ENCODE measurements at regions of chr17 and their contacts with region 1.

Region 1: GRCh38 chr17:42577532-42578281 is at the start of gene PSMC3IP:
- DNase-seq: peak; percentile 89
- H3K4me3 ChIP-seq: peak within 1 kb of the TSS; percentile 53 to 85 (median 59)
- H3K27ac ChIP-seq: peak within 1 kb of the TSS; percentile 85 to 92 (median 90)
- H3K4me1 ChIP-seq: peaks cover 14 to 45% (median 22%) of the 10 kb centered on the region in 3 donors
- H3K27me3 ChIP-seq: no peaks in the 10 kb centered on the region
- CTCF ChIP-seq: peak; percentile 16 to 56 (median 52)
- POLR2A ChIP-seq: peak in 3 of 4 donors; percentile 45 to 66 (median 54)
- total RNA-seq, gene PSMC3IP: 0.61 to 4.8 (median 2.8) TPM

Region 2: DNA sequence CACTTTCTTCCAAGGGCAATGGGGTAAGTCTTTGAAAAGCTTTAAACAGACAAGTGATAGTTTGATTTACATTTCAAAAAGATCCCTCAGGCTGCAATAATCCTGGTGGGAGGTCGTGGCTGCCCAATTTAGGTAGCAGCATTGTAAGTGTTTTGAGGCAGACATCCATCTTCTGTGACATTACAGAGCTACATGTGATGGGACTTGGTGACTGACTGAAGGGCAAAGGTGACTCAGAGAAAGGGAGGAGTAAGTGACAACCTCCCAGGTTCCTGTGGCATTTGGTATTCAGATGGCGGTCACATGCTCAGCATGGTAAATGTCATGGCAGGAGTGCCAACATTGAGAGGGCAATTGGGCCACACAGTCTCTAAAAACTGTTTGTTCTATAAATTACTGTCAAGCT is 215.9 kb before region 1 on chr17:
- intact Hi-C with region 1: no loop called
- DNase-seq: no peak
- H3K4me3 ChIP-seq: no peak overlapping the region
- H3K27ac ChIP-seq: peak overlapping the region in 2 of 4 donors; percentile 23 to 40
- H3K4me1 ChIP-seq: peaks cover 16 to 75% (median 41%) of the 10 kb centered on the region in 3 donors
- H3K27me3 ChIP-seq: no peaks in the 10 kb centered on the region
- CTCF ChIP-seq: no peak
- POLR2A ChIP-seq: no peak

Region 3: DNA sequence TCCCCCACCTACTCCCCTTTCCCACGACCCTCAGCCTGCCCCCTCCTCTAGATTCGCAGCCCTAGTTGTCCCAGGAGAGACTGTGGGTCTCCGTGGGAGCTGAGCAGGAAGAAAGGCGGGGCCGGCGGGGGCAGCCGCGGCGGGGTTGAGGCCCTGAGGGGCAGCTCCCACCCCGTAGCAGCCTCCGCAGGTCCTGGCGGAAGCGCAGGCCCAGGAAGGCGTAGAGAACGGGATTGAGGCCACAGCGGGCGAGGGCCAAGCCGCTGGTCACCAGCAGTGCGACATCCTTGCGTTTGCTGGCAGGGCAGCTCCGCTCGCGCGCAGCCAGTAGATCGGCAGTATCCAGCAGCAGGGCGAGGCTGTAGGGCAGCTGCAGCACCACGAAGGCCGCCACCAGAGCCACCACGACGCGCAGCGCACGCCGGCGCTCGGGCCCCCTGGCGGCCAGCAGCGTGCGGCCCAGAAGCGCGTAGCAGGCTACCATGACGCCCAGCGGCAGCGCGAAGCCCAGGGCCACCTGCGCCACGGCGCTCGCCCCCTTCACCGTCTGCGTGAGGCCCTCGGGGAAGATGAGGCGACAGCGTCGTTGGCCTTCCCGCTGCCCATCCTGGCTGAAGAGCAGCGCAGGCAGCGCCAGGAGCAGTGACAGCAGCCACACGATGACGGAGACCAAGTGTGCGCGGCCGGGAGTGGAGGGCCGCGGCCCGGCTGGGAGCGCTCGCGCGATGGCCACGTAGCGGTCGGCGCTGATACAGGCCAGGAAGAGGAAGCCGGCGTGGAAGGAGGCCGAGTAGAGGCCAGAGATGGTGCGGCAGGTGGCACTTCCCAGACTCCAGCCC is 102.0 kb after region 1 on chr17:
- intact Hi-C with region 1: loop called (anchors 5 kb)
- DNase-seq: no peak
- H3K4me3 ChIP-seq: peak overlapping the region; percentile 83 to 97 (median 94)
- H3K27ac ChIP-seq: peak overlapping the region; percentile 98 to 99 (median 98)
- H3K4me1 ChIP-seq: peaks cover 52 to 88% (median 62%) of the 10 kb centered on the region in 3 donors
- H3K27me3 ChIP-seq: peaks cover 0 to 29% (median 0%) of the 10 kb centered on the region in 4 donors
- CTCF ChIP-seq: peak; percentile 92 to 98 (median 95)
- POLR2A ChIP-seq: peak in 2 of 4 donors; percentile 10 to 24

Measured in esophagus squamous epithelium (tissue), 5 donors.